Sciatic nerve (tissue), 2 donors: ENCODE measurements at regions of chr13 and their contacts with region 1.

Region 1: GRCh38 chr13:86098511-86098910 is 299.3 kb upstream of the SLITRK6 start:
- DNase-seq: no peak
- ATAC-seq: no peak

Region 2: GRCh38 chr13:84946192-84946591 is 1152.3 kb before region 1 on chr13:
- intact Hi-C with region 1: no loop called
- DNase-seq: no peak
- ATAC-seq: no peak

Region 3: GRCh38 chr13:85013006-85013405 is 1085.5 kb before region 1 on chr13:
- intact Hi-C with region 1: loop called (anchors 5 kb)
- DNase-seq: no peak
- ATAC-seq: no peak

Region 4: GRCh38 chr13:86810361-86810760 is 711.9 kb after region 1 on chr13:
- intact Hi-C with region 1: no loop called
- DNase-seq: no peak
- ATAC-seq: peak; percentile 55